ENCODE measurements at regions of chr2 and their contacts with region 1.

Region 1: DNA sequence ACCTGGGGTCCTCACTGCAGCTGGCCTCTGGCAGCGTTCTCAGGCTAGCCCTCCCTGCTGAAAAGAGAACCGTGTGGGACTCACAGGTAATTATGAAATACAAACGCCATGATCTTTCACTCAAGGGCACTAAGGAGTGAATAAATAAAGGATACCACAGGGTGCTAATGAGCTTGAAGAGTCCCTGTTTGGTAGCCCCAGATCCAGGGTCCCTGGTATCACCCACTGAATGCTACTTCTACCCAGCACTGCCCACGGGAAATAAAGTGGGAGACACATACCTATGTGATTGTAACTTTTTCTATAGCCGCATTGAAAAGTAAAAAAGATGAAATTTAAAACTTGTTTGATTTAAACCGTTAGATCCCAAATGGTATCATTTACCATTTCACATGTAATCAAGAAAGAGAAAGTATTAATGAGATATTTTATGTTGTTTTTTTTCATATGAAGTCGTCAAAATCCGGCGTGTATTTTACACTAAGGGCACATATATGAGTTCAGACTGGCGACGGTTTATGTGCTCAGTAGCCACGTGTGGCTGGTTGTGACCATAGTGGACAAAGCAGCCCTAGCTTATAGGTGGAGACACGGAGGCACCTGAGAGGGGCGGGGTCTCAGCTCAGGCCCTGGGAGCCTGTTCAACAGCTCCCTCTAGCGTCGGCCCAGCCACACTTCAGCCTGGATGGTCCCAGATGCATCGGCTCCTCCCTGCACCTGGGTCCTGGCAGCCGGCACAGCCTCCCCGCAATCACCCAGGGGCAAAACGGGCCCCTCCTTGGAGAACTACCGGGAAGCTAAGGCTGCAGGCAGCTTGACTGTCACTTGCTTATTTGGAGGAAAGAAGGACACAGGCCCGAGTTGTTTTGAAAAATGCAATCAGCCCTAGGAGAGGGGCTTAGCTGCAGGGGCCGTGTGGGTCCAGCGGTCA is 39.2 kb downstream of the ODC1 start:
- DNase-seq: peak; percentile 57 to 92 (median 76)
- ATAC-seq: peak; percentile 73 to 87 (median 82)
- H3K4me3 ChIP-seq: peak overlapping the region in 1 of 2 donors; percentile 11
- H3K4me3 Mint-ChIP-seq: peak overlapping the region; percentile 55 to 68 (median 65)
- H3K27ac ChIP-seq: peak overlapping the region; percentile 56
- H3K27ac Mint-ChIP-seq: peak overlapping the region; percentile 90 to 93
- H3K4me1 ChIP-seq: peaks cover 26 to 52% of the 10 kb centered on the region in 2 experiments
- H3K4me1 Mint-ChIP-seq: peaks cover 42 to 47% (median 42%) of the 10 kb centered on the region in 3 donors
- H3K27me3 ChIP-seq: no peaks in the 10 kb centered on the region
- H3K27me3 Mint-ChIP-seq: no peaks in the 10 kb centered on the region

Region 2: DNA sequence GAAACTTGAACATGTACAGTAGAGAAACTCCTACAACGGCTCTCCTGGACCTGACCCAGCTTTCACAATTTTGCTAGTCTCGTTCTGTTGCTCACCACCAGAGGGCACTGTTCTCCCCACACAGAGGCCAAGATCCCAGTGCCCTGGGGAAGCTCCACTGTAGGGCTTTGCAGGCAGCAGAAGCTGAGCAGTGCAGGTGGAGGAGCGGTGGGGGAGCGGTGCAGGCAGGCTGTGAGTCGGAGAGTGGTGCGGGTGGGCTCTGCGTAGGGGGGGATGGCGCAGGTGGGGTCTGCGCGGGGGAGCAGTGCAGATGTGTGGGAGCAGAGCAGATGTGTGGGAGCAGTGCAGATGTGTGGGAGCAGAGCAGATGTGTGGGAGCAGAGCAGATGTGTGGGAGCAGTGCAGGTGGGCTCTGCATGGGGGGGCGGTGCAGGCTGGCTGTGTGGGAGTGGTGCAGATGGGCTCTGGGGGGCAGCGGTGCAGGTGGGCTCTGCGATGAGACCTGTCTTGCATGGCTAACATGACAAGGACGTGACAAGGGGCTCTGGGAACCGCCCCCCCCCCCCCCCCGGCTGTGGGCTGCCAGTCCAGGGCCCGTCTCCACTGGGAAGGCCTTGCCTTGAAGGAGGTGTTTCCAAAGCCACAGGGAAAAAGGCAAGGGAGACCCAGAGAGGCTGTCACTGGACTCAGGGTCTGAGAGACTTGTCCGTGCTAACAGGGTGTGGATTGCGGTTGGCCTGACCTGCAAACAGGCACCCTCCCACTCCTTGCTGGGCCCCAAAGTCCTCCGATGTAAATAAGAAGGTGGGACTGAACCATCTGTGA is 336.0 kb before region 1 on chr2:
- CTCF ChIA-PET with region 1: interaction called, 8 to 25 read pairs
- POLR2A ChIA-PET with region 1: interaction called in 1 of 2 experiments, 3 read pairs
- DNase-seq: peak; percentile 43 to 91 (median 72)
- ATAC-seq: peak; percentile 81 to 93 (median 87)
- H3K4me3 ChIP-seq: no peak overlapping the region
- H3K4me3 Mint-ChIP-seq: no peak overlapping the region
- H3K27ac ChIP-seq: no peak overlapping the region
- H3K27ac Mint-ChIP-seq: no peak overlapping the region
- H3K4me1 ChIP-seq: peaks cover 0 to 5% of the 10 kb centered on the region in 2 experiments
- H3K4me1 Mint-ChIP-seq: peaks cover 3 to 6% (median 3%) of the 10 kb centered on the region in 3 donors
- H3K27me3 ChIP-seq: peaks cover 2 to 53% of the 10 kb centered on the region in 2 experiments
- H3K27me3 Mint-ChIP-seq: peaks cover 32 to 50% of the 10 kb centered on the region in 2 donors

Region 3: GRCh38 chr2:10129490-10129889 is 279.4 kb before region 1 on chr2:
- CTCF ChIA-PET with region 1: interaction called, 41 to 65 read pairs
- POLR2A ChIA-PET with region 1: interaction called in 1 of 2 experiments, 7 read pairs
- DNase-seq: no peak
- ATAC-seq: no peak
- H3K4me3 ChIP-seq: no peak overlapping the region
- H3K4me3 Mint-ChIP-seq: no peak overlapping the region
- H3K27ac ChIP-seq: no peak overlapping the region
- H3K27ac Mint-ChIP-seq: no peak overlapping the region
- H3K4me1 ChIP-seq: peaks cover 0 to 6% of the 10 kb centered on the region in 2 experiments
- H3K4me1 Mint-ChIP-seq: peaks cover 3 to 31% (median 6%) of the 10 kb centered on the region in 3 donors
- H3K27me3 ChIP-seq: no peaks in the 10 kb centered on the region
- H3K27me3 Mint-ChIP-seq: peaks cover under 1 to 7% of the 10 kb centered on the region in 2 donors

Region 4: GRCh38 chr2:10382354-10383061 is 26.4 kb before region 1 on chr2:
- CTCF ChIA-PET with region 1: interaction called, 8 to 24 read pairs
- POLR2A ChIA-PET with region 1: interaction called in 1 of 2 experiments, 4 read pairs
- DNase-seq: peak; percentile 9 to 82 (median 56)
- ATAC-seq: peak; percentile 80 to 94 (median 81)
- H3K4me3 ChIP-seq: peak overlapping the region; percentile 35 to 58
- H3K4me3 Mint-ChIP-seq: peak overlapping the region; percentile 46 to 78 (median 65)
- H3K27ac ChIP-seq: peak overlapping the region; percentile 69
- H3K27ac Mint-ChIP-seq: peak overlapping the region; percentile 89 to 93
- H3K4me1 ChIP-seq: peaks cover 51 to 98% of the 10 kb centered on the region in 2 experiments
- H3K4me1 Mint-ChIP-seq: peaks cover 88 to 94% (median 92%) of the 10 kb centered on the region in 3 donors
- H3K27me3 ChIP-seq: no peaks in the 10 kb centered on the region
- H3K27me3 Mint-ChIP-seq: no peaks in the 10 kb centered on the region

Region 5: DNA sequence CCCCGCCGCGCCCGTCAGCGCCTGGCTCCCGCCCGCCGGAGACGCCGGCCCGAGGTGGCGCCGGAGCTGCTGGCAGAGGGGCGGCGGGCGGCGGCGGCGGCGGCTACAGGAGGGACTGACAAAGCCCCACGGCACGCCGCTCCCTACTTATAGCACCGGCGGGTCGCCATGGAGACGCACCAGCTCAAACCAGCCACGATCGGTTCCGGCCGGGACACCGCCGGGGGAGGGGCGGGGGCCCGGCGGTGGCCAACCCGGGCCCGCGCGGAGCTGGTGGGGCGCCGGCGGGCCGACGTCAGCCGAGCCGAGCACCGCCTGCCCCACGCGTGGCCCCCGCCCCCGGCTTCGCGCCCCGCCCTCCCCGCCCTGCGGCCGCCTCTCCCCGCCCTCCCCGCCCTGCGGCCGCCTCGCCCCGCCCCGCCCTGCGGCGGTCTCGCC is 39.3 kb after region 1 on chr2 and contains the start of gene ODC1:
- CTCF ChIA-PET with region 1: interaction called, 3 to 10 read pairs
- POLR2A ChIA-PET with region 1: interaction called, 3 to 4 read pairs
- DNase-seq: peak; percentile 91 to 99 (median 95)
- ATAC-seq: peak; percentile 86 to 91 (median 87)
- H3K4me3 ChIP-seq: peak within 1 kb of the TSS; percentile 60 to 64
- H3K4me3 Mint-ChIP-seq: peak within 1 kb of the TSS; percentile 79 to 85 (median 81)
- H3K27ac ChIP-seq: peak within 1 kb of the TSS; percentile 96
- H3K27ac Mint-ChIP-seq: peak within 1 kb of the TSS; percentile 81 to 86
- H3K4me1 ChIP-seq: peaks cover 6 to 33% of the 10 kb centered on the region in 2 experiments
- H3K4me1 Mint-ChIP-seq: peaks cover 16 to 41% (median 41%) of the 10 kb centered on the region in 3 donors
- H3K27me3 ChIP-seq: no peaks in the 10 kb centered on the region
- H3K27me3 Mint-ChIP-seq: no peaks in the 10 kb centered on the region
- total RNA-seq, gene ODC1: 40.6 to 102 (median 53.3) TPM